B cell (primary cell): ENCODE measurements at regions of chr6 and their contacts with region 1.

Region 1: DNA sequence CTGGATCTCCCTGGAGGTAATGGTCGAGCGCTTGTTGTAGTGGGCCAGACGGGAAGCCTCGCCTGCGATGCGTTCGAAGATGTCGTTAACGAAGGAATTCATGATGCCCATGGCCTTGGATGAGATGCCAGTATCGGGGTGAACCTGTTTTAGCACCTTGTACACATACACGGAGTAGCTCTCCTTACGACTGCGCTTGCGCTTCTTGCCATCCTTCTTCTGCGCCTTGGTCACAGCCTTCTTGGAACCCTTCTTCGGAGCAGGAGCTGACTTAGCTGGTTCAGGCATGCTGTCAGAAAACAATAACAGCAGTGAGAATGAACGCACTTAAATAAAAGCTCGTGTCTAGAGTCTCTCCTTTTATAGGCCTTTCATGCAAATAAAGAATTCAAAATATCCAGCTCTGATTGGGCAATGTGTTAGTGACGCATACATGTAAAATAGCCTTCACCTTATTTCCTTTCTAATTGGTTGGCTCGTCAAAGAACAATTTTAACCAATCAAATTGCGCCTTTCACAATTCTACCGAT is 129.2 kb downstream of the HFE start:
- DNase-seq: peak; percentile 96
- ATAC-seq: peak; percentile 80
- H3K4me3 ChIP-seq: peak overlapping the region; percentile 70 to 93 (median 74)
- H3K4me3 Mint-ChIP-seq: no peak overlapping the region
- H3K27ac ChIP-seq: peak overlapping the region; percentile 81 to 82
- H3K27ac Mint-ChIP-seq: no peak overlapping the region
- H3K4me1 ChIP-seq: peaks cover 15 to 26% of the 10 kb centered on the region in 2 donors
- H3K4me1 Mint-ChIP-seq: peaks cover 19% of the 10 kb centered on the region
- H3K27me3 ChIP-seq: no peaks in the 10 kb centered on the region
- H3K27me3 Mint-ChIP-seq: no peaks in the 10 kb centered on the region
- CTCF ChIP-seq: no peak

Region 2: DNA sequence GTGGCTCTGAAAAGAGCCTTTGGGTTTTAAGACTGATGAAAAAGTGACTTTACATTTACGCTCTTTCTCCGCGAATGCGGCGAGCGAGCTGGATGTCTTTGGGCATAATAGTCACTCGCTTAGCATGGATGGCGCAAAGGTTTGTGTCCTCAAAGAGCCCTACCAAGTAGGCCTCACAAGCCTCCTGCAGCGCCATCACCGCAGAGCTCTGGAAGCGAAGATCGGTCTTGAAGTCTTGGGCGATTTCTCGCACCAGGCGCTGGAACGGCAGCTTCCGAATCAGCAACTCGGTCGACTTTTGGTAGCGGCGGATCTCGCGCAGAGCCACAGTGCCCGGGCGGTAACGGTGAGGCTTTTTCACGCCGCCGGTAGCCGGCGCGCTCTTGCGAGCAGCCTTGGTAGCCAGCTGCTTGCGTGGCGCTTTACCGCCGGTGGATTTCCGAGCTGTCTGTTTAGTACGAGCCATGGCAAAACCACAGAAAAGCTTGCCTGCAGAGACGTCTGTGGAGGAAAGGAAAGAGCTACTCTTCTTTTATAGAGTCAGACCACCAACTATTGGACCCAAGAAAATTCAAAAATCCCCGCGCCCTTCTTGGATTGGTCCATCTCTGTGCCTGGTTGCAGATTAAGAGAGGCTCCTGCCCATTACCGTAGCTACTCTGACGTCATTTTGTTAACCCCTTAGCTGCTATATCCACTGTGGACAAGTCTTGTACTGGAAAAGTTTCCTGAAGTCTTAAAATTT is 184.7 kb before region 1 on chr6:
- CTCF ChIA-PET with region 1: no interaction called
- POLR2A ChIA-PET with region 1: interaction called, 11 read pairs
- intact Hi-C with region 1: no loop called
- DNase-seq: peak; percentile 90
- ATAC-seq: peak; percentile 63
- H3K4me3 ChIP-seq: peak overlapping the region; percentile 67 to 85 (median 69)
- H3K4me3 Mint-ChIP-seq: peak overlapping the region; percentile 96
- H3K27ac ChIP-seq: peak overlapping the region; percentile 76 to 78
- H3K27ac Mint-ChIP-seq: peak overlapping the region; percentile 87
- H3K4me1 ChIP-seq: peaks cover 26 to 36% of the 10 kb centered on the region in 2 donors
- H3K4me1 Mint-ChIP-seq: peaks cover 46% of the 10 kb centered on the region
- H3K27me3 ChIP-seq: no peaks in the 10 kb centered on the region
- H3K27me3 Mint-ChIP-seq: no peaks in the 10 kb centered on the region
- CTCF ChIP-seq: no peak

Region 3: DNA sequence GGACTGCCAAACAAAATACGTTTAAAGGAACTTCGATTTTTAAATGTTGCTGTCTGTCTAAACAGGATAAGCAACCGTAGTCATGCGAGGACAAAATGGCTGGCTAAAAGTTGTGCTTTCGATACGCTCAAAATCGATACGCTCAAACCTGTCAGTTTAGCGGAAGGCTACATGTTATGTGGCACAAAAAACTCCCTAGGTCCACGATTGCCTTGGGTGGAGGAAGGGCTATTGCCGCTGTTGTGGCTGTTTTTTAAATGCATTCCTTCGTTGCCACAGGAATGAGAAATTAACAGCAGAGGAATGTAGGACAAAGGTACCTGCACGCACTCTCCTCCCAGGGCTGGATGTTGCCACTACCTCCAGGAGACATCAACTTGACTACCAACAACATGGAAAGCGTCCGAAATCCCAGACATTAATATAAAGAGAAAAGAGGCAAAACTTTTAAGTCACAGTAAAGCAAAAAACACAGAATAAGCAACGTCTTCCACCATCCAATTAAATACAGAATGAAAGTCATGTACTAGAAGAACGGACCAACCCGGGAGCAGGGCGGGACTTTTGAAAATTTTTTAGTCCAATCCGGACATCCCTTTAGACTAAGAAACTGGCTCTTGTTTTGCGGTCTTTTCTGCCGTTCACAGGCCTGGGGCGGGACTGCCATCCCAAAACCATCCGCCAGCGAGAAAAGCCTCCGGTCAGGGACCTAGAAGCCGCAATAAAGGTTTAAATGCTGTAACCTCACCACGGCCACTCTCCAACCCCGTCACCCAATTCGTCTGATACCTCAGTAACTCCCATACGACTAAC is 161.4 kb before region 1 on chr6:
- CTCF ChIA-PET with region 1: no interaction called
- POLR2A ChIA-PET with region 1: interaction called, 14 read pairs
- intact Hi-C with region 1: no loop called
- DNase-seq: peak; percentile 93
- ATAC-seq: peak; percentile 65
- H3K4me3 ChIP-seq: peak overlapping the region; percentile 69 to 100 (median 94)
- H3K4me3 Mint-ChIP-seq: peak overlapping the region; percentile 96
- H3K27ac ChIP-seq: peak overlapping the region; percentile 80 to 91
- H3K27ac Mint-ChIP-seq: peak overlapping the region; percentile 97
- H3K4me1 ChIP-seq: peaks cover 12 to 16% of the 10 kb centered on the region in 2 donors
- H3K4me1 Mint-ChIP-seq: peaks cover 15% of the 10 kb centered on the region
- H3K27me3 ChIP-seq: no peaks in the 10 kb centered on the region
- H3K27me3 Mint-ChIP-seq: no peaks in the 10 kb centered on the region
- CTCF ChIP-seq: no peak

Region 4: DNA sequence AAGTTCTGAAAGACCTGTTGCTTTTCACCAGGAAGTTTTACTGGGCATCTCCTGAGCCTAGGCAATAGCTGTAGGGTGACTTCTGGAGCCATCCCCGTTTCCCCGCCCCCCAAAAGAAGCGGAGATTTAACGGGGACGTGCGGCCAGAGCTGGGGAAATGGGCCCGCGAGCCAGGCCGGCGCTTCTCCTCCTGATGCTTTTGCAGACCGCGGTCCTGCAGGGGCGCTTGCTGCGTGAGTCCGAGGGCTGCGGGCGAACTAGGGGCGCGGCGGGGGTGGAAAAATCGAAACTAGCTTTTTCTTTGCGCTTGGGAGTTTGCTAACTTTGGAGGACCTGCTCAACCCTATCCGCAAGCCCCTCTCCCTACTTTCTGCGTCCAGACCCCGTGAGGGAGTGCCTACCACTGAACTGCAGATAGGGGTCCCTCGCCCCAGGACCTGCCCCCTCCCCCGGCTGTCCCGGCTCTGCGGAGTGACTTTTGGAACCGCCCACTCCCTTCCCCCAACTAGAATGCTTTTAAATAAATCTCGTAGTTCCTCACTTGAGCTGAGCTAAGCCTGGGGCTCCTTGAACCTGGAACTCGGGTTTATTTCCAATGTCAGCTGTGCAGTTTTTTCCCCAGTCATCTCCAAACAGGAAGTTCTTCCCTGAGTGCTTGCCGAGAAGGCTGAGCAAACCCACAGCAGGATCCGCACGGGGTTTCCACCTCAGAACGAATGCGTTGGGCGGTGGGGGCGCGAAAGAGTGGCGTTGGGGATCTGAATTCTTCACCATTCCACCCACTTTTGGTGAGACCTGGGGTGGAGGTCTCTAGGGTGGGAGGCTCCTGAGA is 128.9 kb before region 1 on chr6 and contains the start of gene HFE:
- CTCF ChIA-PET with region 1: no interaction called
- POLR2A ChIA-PET with region 1: no interaction called
- intact Hi-C with region 1: no loop called
- DNase-seq: peak; percentile 70
- ATAC-seq: peak; percentile 70
- H3K4me3 ChIP-seq: peak within 1 kb of the TSS; percentile 63 to 91 (median 81)
- H3K4me3 Mint-ChIP-seq: peak within 1 kb of the TSS; percentile 91
- H3K27ac ChIP-seq: peak within 1 kb of the TSS; percentile 64 to 73
- H3K27ac Mint-ChIP-seq: peak within 1 kb of the TSS; percentile 88
- H3K4me1 ChIP-seq: peaks cover 41 to 56% of the 10 kb centered on the region in 2 donors
- H3K4me1 Mint-ChIP-seq: peaks cover 43% of the 10 kb centered on the region
- H3K27me3 ChIP-seq: no peaks in the 10 kb centered on the region
- H3K27me3 Mint-ChIP-seq: no peaks in the 10 kb centered on the region
- CTCF ChIP-seq: no peak
- total RNA-seq, gene HFE: 6.3 and 6.5 TPM in 2 replicates

Region 5: DNA sequence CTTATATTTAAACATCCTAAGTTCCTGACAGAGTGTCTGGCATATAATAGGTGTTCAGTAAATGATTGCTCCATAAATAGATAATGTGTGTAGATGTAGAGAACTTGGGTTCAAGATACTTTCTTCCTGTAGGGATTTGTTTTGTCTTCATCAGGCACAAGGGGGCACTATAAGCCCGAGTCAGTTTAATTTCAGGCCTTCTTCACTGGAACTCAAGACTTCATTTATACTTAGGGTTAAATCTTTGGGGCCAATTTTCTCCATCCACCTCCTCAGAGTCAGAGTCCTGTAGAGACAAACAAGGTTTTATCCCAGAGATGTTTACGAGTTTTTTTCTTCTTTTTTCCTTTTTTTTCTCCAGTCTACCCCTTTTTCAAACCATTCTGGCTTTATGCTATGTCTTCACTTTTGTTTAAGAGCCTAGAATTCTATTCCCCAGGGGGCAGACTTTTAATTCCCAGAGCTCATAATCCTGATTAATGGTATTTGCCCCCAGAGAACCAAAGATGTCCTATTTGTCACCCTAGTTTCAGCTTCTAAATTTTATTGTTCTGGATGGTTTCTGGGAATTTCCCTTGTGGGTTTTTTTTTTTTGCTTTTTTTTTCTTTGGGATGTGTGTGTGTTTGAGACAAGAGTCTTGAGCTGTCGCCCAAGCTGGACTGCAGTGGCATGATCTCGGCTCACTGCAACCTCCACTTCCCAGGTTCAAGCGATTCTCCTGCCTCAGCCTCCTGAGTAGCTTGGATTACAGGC is 40.8 kb before region 1 on chr6:
- CTCF ChIA-PET with region 1: interaction called, 8 read pairs
- POLR2A ChIA-PET with region 1: interaction called, 23 read pairs
- intact Hi-C with region 1: no loop called
- DNase-seq: peak; percentile 81
- ATAC-seq: no peak
- H3K4me3 ChIP-seq: no peak overlapping the region
- H3K4me3 Mint-ChIP-seq: peak overlapping the region; percentile 21
- H3K27ac ChIP-seq: no peak overlapping the region
- H3K27ac Mint-ChIP-seq: peak overlapping the region; percentile 85
- H3K4me1 ChIP-seq: peaks cover 21 to 26% of the 10 kb centered on the region in 2 donors
- H3K4me1 Mint-ChIP-seq: peaks cover 29% of the 10 kb centered on the region
- H3K27me3 ChIP-seq: no peaks in the 10 kb centered on the region
- H3K27me3 Mint-ChIP-seq: no peaks in the 10 kb centered on the region
- CTCF ChIP-seq: peak; percentile 93

Region 6: DNA sequence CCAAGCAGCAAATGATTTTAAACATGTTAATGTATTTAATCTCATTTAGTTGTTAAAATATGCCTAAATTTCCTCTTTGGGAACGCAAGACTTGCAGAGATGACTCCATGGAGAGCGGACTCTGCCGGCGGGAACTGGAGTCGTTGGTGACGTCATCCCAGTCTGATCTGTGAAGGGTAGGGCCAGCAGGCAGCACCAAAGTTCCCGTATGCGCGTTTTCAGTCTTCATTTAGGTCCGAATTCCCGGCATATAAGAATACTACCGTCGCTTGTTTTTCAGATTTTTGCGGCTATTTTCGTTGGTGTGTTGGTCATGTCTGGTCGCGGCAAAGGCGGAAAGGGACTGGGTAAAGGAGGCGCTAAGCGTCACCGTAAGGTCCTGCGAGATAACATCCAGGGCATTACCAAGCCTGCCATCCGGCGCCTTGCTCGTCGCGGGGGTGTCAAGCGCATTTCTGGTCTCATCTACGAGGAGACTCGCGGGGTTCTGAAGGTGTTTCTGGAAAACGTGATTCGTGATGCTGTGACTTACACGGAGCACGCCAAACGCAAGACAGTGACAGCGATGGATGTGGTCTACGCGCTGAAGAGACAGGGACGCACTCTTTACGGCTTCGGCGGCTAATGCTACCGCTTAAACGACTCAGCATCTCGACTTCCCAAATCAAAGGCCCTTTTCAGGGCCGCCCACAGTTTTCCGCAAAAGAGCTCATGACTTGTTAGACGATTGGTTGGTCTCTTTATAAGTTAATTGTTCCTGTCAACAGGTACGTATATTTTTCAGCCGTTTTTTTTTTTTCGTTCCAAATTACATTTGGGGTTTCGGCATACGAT is 11.9 kb before region 1 on chr6:
- CTCF ChIA-PET with region 1: interaction called, 40 read pairs
- POLR2A ChIA-PET with region 1: interaction called, 206 read pairs
- intact Hi-C with region 1: loop called (anchors 1 kb)
- DNase-seq: peak; percentile 96
- ATAC-seq: peak; percentile 65
- H3K4me3 ChIP-seq: peak overlapping the region; percentile 76 to 94 (median 81)
- H3K4me3 Mint-ChIP-seq: no peak overlapping the region
- H3K27ac ChIP-seq: peak overlapping the region; percentile 88 to 96
- H3K27ac Mint-ChIP-seq: no peak overlapping the region
- H3K4me1 ChIP-seq: peaks cover 26 to 38% of the 10 kb centered on the region in 2 donors
- H3K4me1 Mint-ChIP-seq: peaks cover 30% of the 10 kb centered on the region
- H3K27me3 ChIP-seq: no peaks in the 10 kb centered on the region
- H3K27me3 Mint-ChIP-seq: no peaks in the 10 kb centered on the region
- CTCF ChIP-seq: no peak

Region 7: DNA sequence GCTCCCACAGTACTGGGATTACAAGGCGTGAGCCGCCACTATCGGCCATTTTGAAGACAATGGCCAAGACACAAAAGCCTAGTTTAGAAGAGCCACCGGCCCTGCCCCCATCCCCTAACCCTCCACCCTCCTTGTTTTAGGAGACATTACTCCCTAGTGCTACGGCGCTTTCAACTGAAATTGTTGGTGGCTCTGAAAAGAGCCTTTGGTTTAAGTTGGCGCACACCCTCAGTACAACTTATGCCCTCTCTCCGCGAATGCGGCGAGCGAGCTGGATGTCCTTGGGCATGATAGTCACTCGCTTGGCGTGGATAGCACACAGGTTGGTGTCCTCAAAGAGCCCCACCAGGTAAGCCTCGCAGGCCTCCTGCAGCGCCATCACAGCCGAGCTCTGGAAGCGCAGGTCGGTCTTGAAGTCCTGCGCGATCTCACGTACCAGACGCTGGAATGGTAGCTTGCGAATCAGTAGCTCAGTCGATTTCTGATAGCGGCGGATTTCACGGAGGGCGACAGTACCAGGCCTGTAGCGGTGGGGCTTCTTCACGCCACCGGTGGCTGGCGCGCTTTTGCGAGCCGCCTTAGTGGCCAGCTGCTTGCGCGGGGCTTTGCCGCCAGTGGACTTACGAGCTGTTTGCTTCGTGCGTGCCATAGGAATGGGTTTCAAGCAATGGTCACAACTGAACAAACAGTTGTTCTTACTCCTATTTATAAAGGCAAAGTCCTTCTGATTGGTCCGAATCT is 33.7 kb after region 1 on chr6:
- CTCF ChIA-PET with region 1: interaction called, 27 read pairs
- POLR2A ChIA-PET with region 1: interaction called, 9 read pairs
- intact Hi-C with region 1: loop called (anchors 1 kb)
- DNase-seq: peak; percentile 88
- ATAC-seq: peak; percentile 67
- H3K4me3 ChIP-seq: peak overlapping the region; percentile 68 to 90 (median 83)
- H3K4me3 Mint-ChIP-seq: peak overlapping the region; percentile 97
- H3K27ac ChIP-seq: peak overlapping the region; percentile 73 to 74
- H3K27ac Mint-ChIP-seq: peak overlapping the region; percentile 97
- H3K4me1 ChIP-seq: peaks cover 8 to 16% of the 10 kb centered on the region in 2 donors
- H3K4me1 Mint-ChIP-seq: peaks cover 43% of the 10 kb centered on the region
- H3K27me3 ChIP-seq: no peaks in the 10 kb centered on the region
- H3K27me3 Mint-ChIP-seq: no peaks in the 10 kb centered on the region
- CTCF ChIP-seq: peak; percentile 70

Region 8: GRCh38 chr6:26375270-26375669 is 158.8 kb after region 1 on chr6:
- CTCF ChIA-PET with region 1: no interaction called
- POLR2A ChIA-PET with region 1: no interaction called
- intact Hi-C with region 1: no loop called
- DNase-seq: no peak
- ATAC-seq: no peak
- H3K4me3 ChIP-seq: no peak overlapping the region
- H3K4me3 Mint-ChIP-seq: no peak overlapping the region
- H3K27ac ChIP-seq: peak overlapping the region; percentile 53 to 74
- H3K27ac Mint-ChIP-seq: peak overlapping the region; percentile 88
- H3K4me1 ChIP-seq: peaks cover 9 to 11% of the 10 kb centered on the region in 2 donors
- H3K4me1 Mint-ChIP-seq: peaks cover 40% of the 10 kb centered on the region
- H3K27me3 ChIP-seq: no peaks in the 10 kb centered on the region
- H3K27me3 Mint-ChIP-seq: no peaks in the 10 kb centered on the region
- CTCF ChIP-seq: no peak

Region 9: DNA sequence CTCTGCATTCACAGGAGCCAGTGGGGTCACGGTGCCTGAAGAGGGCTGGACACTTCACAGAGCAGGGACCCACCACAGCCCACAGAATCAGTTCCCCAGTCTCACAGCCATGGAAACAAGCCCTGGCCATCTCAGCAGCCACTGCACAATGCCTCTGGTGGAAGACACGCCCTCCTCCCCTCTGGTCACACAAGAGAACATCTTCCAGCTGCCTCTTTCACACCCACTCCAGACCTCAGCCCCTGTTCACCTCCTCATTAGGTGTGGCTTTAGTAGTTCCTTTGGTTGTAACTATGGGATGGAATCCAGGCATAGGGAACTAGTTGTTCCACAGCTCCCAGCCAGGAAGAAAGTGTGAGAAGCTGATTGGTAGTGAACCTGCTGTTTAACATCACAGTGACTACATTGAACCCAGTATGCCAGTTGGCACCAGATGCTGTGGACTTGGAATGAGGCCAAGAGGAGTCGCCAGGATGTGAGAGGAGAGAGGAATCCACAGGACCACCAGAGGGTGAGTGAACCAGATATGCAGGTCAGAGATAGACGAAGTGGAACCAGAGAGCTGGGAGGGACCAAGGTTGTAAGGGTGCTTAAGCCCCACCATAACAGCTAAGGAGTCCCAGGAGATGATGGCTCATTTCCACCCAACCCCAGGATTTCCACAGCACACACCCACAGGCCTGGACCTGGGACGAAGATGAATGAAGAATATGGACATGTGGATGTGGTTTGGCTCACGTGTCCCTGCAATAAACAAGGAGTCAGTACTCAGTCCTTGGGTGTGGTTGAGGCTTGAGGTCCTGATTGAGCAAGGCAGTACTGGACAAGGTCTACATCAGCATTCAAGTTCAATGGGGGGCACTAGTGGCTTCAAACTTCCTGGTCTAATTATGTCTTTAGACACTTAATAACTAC is 215.1 kb after region 1 on chr6:
- CTCF ChIA-PET with region 1: no interaction called
- POLR2A ChIA-PET with region 1: no interaction called
- intact Hi-C with region 1: no loop called
- DNase-seq: no peak
- ATAC-seq: no peak
- H3K4me3 ChIP-seq: no peak overlapping the region
- H3K4me3 Mint-ChIP-seq: no peak overlapping the region
- H3K27ac ChIP-seq: no peak overlapping the region
- H3K27ac Mint-ChIP-seq: no peak overlapping the region
- H3K4me1 ChIP-seq: no peaks in the 10 kb centered on the region
- H3K4me1 Mint-ChIP-seq: no peaks in the 10 kb centered on the region
- H3K27me3 ChIP-seq: no peaks in the 10 kb centered on the region
- H3K27me3 Mint-ChIP-seq: no peaks in the 10 kb centered on the region
- CTCF ChIP-seq: no peak

Region 10: DNA sequence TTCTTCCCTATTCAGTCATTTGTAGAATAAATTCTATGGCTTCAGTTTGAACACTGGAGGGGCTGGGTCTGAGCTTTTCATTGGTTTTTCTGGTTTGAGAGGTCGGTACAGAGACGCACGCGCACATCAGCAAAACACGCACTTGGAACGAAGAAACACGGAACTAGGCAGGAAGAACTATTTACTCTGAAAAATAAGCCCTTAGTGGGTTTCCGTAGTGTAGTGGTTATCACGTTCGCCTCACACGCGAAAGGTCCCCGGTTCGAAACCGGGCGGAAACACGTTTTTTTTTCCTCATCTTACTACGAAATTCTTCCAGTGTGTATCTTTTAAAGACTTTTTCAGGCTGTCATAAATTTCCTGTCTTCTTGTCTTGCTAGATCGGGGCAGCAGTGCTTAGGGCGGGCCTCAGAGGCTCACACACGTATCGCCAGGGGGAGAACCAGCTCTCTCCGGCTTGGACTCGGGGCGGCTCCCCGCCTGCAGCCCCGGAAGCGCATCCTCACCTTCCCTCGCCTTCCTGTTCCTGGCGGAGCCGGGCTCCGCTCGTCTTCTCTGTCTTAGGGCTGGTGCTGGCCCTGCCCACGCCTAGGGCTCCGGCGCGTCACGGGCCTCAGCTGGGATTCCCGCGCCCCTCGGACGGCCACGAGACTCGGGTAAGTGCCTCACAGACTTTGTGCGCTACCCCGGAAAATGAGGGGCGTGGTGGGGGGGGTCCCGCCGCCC is 321.6 kb after region 1 on chr6 and contains the start of gene HMGN4:
- CTCF ChIA-PET with region 1: no interaction called
- POLR2A ChIA-PET with region 1: interaction called, 10 read pairs
- intact Hi-C with region 1: no loop called
- DNase-seq: peak; percentile 97
- ATAC-seq: peak; percentile 68
- H3K4me3 ChIP-seq: peak within 1 kb of the TSS; percentile 89 to 98 (median 92)
- H3K4me3 Mint-ChIP-seq: peak within 1 kb of the TSS; percentile 96
- H3K27ac ChIP-seq: peak within 1 kb of the TSS; percentile 84 to 94
- H3K27ac Mint-ChIP-seq: peak within 1 kb of the TSS; percentile 99
- H3K4me1 ChIP-seq: peaks cover 29 to 35% of the 10 kb centered on the region in 2 donors
- H3K4me1 Mint-ChIP-seq: peaks cover 56% of the 10 kb centered on the region
- H3K27me3 ChIP-seq: no peaks in the 10 kb centered on the region
- H3K27me3 Mint-ChIP-seq: peaks cover 3% of the 10 kb centered on the region
- CTCF ChIP-seq: peak; percentile 8
- total RNA-seq, gene HMGN4: 81.1 and 82.4 TPM in 2 replicates

Region 11: GRCh38 chr6:27078734-27079357 is 862.4 kb after region 1 on chr6:
- CTCF ChIA-PET with region 1: no interaction called
- POLR2A ChIA-PET with region 1: no interaction called
- intact Hi-C with region 1: no loop called
- DNase-seq: peak; percentile 65
- ATAC-seq: peak; percentile 57
- H3K4me3 ChIP-seq: peak overlapping the region in 3 of 5 experiments; percentile 37 to 56 (median 41)
- H3K4me3 Mint-ChIP-seq: peak overlapping the region; percentile 78
- H3K27ac ChIP-seq: no peak overlapping the region
- H3K27ac Mint-ChIP-seq: no peak overlapping the region
- H3K4me1 ChIP-seq: peaks cover 4% of the 10 kb centered on the region in 2 donors
- H3K4me1 Mint-ChIP-seq: peaks cover 3% of the 10 kb centered on the region
- H3K27me3 ChIP-seq: peaks cover 0 to 21% (median 8%) of the 10 kb centered on the region in 4 experiments
- H3K27me3 Mint-ChIP-seq: peaks cover 71% of the 10 kb centered on the region
- CTCF ChIP-seq: peak; percentile 69